HEK293 (cell line): ENCODE measurements at regions of chr5 and their contacts with region 1.

Region 1: DNA sequence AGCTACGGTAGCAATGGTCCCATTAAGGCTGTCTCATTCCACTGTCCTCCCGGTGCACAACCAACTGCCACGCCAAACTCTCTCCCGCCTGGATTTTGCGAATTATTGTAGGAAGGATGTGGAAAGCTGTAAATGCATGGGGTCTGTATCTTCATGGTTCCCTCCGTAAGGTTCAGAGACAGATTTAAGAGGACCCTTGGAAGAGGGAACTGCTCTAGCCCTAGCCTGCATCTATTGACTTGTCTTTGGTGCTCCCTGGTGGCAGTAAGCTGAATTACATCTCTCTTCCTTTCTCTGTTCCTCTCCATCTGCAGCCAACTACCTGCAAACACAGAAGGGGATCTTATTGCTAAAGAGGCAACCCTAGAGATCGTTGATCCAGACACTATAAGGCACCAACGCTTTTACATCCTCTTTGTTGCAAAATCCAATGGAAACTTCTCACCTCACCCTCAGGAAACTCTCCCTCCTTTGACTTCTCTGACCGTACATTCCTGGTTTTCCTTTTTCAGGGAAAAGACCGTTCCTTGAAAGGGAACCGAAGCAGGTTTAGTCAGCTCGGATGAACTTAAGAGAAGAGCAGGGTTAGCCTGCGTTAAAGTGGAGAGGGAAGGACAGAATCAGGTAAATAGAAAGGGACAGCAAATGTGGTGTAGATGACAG is 11.9 kb downstream of the CAPSL start:
- H3K4me3 ChIP-seq: no peak overlapping the region
- H3K27ac ChIP-seq: no peak overlapping the region
- H3K4me1 ChIP-seq: peaks cover 4% of the 10 kb centered on the region; the same call in 1 of the 2 replicates
- CTCF ChIP-seq: peak; percentile 78

Region 2: DNA sequence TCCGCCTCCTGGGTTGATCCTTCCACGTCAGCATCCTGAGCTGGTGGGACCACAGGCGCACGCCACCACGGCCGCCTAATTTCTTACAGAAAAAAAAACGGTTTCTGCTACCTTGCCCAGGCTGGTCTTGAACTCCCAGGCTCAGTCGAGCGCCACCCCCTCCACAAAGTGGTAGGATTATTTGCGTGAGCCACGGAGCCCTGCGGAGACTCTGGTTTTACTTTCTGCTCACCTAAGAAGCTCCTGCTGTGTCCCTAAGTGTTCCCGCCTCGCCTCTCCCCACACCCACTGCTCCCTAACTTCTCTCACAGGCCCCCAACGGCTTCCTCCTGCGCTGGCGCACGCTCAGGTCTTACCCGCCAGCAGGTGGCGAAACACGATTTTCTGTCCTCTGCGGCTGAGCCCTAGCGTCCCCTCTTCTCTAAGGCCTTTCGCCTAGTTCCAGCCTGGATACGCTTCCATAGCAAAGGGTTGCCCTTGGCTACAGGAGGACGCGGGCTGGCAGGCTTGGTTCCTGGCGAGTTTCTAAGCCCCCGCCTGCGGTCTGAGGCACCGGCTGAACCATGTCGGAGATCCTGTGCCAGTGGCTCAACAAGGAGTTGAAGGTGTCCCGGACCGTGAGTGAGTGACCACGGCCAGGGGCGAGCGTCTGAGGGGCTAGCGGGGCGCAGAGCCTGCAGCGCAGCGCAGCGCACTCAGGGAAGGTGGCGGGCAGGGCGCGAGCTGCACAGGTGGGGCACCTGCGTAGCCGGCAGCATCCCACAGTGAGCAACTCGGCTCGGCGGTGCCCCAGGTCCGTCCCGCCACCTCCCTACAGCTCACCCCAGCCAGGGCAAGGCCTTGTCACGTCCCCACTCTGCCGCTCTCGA is 308.9 kb before region 1 on chr5 and contains the start of gene SPEF2:
- CTCF ChIA-PET with region 1: interaction called, 16 read pairs
- POLR2A ChIA-PET with region 1: no interaction called
- H3K4me3 ChIP-seq: peak within 1 kb of the TSS; percentile 74
- H3K27ac ChIP-seq: peak within 1 kb of the TSS; percentile 27; the same call in 1 of the 2 replicates
- H3K4me1 ChIP-seq: peaks cover 4% of the 10 kb centered on the region; the same call in 1 of the 2 replicates
- CTCF ChIP-seq: peak; percentile 99

Region 3: DNA sequence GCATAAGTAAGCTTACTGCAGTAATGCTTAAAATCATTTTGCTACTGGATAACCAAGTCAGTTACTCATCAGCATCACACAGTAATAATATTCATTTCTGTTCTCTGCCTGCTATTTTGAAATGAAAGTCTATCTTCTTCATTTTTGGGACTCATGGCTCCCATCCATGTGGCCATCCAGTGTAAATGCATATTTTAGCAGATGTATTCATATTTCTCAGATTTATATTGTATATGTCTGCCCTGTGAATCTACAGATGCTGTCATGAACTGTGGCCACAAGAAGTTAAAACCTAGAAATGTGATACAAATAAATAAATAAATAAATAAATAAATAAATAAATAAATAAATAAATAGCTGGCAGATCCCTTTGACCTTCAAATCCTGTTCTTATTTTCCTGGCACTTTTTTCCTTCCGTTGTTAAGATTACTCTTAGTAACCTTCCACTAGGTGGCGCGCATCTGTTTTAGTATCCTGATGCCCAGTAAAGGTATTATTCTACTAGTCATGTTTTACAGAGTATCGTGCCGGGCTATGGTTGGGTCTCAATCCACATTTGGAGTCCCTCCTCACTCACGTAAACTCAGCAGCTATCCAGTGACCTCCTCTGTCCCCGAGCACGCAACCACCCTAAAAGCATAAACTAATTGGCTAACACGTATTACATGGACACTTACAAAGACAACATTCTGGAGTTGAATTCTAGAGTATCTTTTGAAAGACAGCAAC is 149.0 kb before region 1 on chr5:
- CTCF ChIA-PET with region 1: interaction called, 147 read pairs
- POLR2A ChIA-PET with region 1: no interaction called
- H3K4me3 ChIP-seq: no peak overlapping the region
- H3K27ac ChIP-seq: no peak overlapping the region
- H3K4me1 ChIP-seq: no peaks in the 10 kb centered on the region
- CTCF ChIP-seq: no peak

Region 4: GRCh38 chr5:35938568-35939227 is 12.2 kb after region 1 on chr5 and contains the start of gene CAPSL:
- CTCF ChIA-PET with region 1: interaction called, 13 read pairs
- POLR2A ChIA-PET with region 1: no interaction called
- H3K4me3 ChIP-seq: no peak within 1 kb of the TSS
- H3K27ac ChIP-seq: no peak within 1 kb of the TSS
- H3K4me1 ChIP-seq: no peaks in the 10 kb centered on the region
- CTCF ChIP-seq: no peak